ENCODE measurements at regions of chr20 and their contacts with region 1.

Region 1: DNA sequence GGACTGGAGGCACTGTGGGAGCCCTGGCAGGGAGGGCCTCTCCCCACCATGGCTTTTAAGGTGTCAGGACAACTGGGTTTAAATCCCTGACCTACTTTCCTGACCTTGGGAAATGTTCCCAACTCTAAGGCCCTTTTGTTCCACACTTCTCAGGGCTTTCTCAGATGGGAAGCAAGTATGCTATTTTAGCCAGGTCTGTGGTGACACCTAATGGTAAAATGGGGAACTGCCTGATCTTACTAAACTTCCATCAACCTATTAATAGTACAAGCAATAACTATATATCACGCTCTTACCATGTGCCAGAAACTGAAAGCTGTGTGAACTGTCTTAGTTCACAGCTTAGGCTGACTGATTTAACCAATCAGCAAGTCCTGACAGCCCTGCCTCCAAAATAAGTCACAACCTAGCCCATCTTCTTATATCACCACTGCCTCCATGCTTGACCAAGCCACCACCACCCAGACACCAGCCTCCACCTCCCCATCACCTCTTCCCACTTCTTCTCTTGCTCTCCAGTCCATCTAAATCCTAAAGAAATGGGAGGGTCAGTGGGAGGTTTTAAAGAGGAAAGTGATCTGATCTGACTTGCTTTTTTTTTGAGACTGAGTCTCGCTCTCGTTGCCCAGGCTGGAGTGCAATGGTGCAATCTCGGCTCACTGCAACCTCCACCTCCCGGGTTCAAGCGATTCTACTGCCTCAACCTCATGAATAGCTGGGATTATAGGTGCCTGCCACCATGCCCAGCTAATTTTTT is 6.9 kb upstream of the BLCAP start:
- DNase-seq: peak; percentile 38 to 79
- ATAC-seq: peak; percentile 81 to 91
- H3K4me3 ChIP-seq: no peak overlapping the region
- H3K27ac ChIP-seq: no peak overlapping the region
- H3K4me1 ChIP-seq: no peaks in the 10 kb centered on the region
- CTCF ChIP-seq: peak; percentile 92
- EP300 ChIP-seq: no peak
- POLR2A ChIP-seq: no peak
- RAD21 ChIP-seq: peak; percentile 94 to 98

Region 2: GRCh38 chr20:37202267-37202943 is 332.2 kb before region 1 on chr20:
- CTCF ChIA-PET with region 1: interaction called, 120 read pairs
- POLR2A ChIA-PET with region 1: no interaction called
- DNase-seq: peak; percentile 70 to 72
- ATAC-seq: peak; percentile 87 to 89
- H3K4me3 ChIP-seq: no peak overlapping the region
- H3K27ac ChIP-seq: no peak overlapping the region
- H3K4me1 ChIP-seq: peaks cover 7% of the 10 kb centered on the region; the same call in 2 of the 3 replicates
- CTCF ChIP-seq: peak; percentile 86
- EP300 ChIP-seq: no peak
- POLR2A ChIP-seq: no peak
- RAD21 ChIP-seq: peak; percentile 28 to 33

Region 3: DNA sequence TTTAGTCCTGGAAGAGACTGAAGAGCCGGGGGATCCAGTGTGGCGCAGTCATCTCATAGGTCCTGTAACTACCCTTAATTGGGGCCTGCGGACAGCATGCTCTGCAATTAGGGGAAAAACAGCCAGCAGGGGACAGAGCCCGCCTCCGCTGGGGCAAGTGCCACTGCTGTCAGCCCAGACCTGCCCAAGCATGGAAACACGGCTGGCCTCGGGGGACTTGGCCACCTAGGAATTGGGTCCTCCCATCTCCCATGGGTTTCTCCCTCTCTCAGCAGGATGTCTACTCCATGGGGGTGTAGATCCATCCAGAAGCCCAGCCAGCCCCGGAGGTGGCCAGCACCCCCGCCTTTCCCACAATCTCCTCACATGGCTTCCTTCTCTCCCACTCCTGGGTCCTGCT is 276.6 kb before region 1 on chr20:
- CTCF ChIA-PET with region 1: interaction called, 17 read pairs
- POLR2A ChIA-PET with region 1: no interaction called
- DNase-seq: no peak
- ATAC-seq: no peak; a peak in 1 of 6 replicates
- H3K4me3 ChIP-seq: no peak overlapping the region
- H3K27ac ChIP-seq: no peak overlapping the region
- H3K4me1 ChIP-seq: no peaks in the 10 kb centered on the region
- CTCF ChIP-seq: no peak
- EP300 ChIP-seq: no peak
- POLR2A ChIP-seq: no peak
- RAD21 ChIP-seq: no peak

Region 4: GRCh38 chr20:37282556-37282955 is 252.0 kb before region 1 on chr20:
- CTCF ChIA-PET with region 1: interaction called, 36 read pairs
- POLR2A ChIA-PET with region 1: no interaction called
- DNase-seq: peak in 1 of 2 experiments; percentile 79
- ATAC-seq: peak; percentile 83 to 86
- H3K4me3 ChIP-seq: no peak overlapping the region
- H3K27ac ChIP-seq: peak overlapping the region; percentile 20 to 73; a peak in 5 of 6 replicates
- H3K4me1 ChIP-seq: peaks cover 8% of the 10 kb centered on the region; the same call in 2 of the 3 replicates
- CTCF ChIP-seq: peak; percentile 57
- EP300 ChIP-seq: no peak
- POLR2A ChIP-seq: no peak
- RAD21 ChIP-seq: peak; percentile 73 to 88

Measured in A549 (cell line).